Caco-2 (cell line): ENCODE measurements at regions of chr2 and their contacts with region 1.

Region 1: DNA sequence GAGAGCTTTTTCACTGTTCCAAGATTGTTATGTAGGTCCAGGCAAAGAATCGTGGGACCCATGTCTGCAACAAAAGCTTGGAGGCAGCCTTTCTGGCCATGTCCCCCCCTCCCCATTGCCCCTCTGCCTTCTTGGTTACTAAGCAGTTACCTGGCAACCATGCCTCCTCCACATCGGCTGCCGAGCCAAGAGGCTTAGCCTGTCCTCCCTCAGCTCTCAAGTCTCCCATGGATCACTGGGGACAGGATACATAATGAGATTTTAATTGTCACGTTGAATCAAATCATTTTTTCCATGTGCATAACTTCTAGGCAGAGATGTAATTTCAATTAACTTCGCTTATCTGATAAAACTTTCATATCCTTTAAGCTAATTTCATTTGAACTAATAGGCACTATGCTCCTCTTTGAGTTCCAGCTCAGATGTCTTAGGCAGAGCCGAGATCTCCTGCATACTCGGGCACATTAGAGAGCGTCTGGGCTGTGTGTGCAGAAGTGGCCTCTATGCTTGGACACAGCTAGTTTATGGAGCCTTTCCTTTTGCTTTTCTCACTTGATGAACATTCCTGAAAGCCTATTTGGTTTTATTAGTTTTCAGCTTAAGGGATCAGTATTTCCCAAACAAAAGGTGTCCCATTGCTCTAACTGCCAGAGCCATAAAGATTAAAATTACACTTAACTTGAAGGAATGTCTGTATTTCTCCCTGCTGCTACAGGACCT is 80.7 kb downstream of the LYPD1 start:
- DNase-seq: peak in 1 of 2 experiments; percentile 12
- H3K4me3 ChIP-seq: no peak overlapping the region
- H3K4me3 Mint-ChIP-seq: no peak overlapping the region
- H3K27ac Mint-ChIP-seq: no peak overlapping the region
- H3K4me1 ChIP-seq: peaks cover 48% of the 10 kb centered on the region
- H3K4me1 Mint-ChIP-seq: peaks cover 47% of the 10 kb centered on the region
- H3K27me3 ChIP-seq: no peaks in the 10 kb centered on the region
- H3K27me3 Mint-ChIP-seq: no peaks in the 10 kb centered on the region
- CTCF ChIP-seq: no peak

Region 2: GRCh38 chr2:132562245-132562644 is 27.0 kb before region 1 on chr2:
- CTCF ChIA-PET with region 1: no interaction called
- POLR2A ChIA-PET with region 1: no interaction called
- intact Hi-C with region 1: loop called (anchors 2 kb)
- DNase-seq: no peak
- H3K4me3 ChIP-seq: no peak overlapping the region
- H3K4me3 Mint-ChIP-seq: no peak overlapping the region
- H3K27ac Mint-ChIP-seq: no peak overlapping the region
- H3K4me1 ChIP-seq: peaks cover 5% of the 10 kb centered on the region; the same call in 1 of the 2 replicates
- H3K4me1 Mint-ChIP-seq: peaks cover 8% of the 10 kb centered on the region
- H3K27me3 ChIP-seq: no peaks in the 10 kb centered on the region
- H3K27me3 Mint-ChIP-seq: no peaks in the 10 kb centered on the region
- CTCF ChIP-seq: no peak

Region 3: DNA sequence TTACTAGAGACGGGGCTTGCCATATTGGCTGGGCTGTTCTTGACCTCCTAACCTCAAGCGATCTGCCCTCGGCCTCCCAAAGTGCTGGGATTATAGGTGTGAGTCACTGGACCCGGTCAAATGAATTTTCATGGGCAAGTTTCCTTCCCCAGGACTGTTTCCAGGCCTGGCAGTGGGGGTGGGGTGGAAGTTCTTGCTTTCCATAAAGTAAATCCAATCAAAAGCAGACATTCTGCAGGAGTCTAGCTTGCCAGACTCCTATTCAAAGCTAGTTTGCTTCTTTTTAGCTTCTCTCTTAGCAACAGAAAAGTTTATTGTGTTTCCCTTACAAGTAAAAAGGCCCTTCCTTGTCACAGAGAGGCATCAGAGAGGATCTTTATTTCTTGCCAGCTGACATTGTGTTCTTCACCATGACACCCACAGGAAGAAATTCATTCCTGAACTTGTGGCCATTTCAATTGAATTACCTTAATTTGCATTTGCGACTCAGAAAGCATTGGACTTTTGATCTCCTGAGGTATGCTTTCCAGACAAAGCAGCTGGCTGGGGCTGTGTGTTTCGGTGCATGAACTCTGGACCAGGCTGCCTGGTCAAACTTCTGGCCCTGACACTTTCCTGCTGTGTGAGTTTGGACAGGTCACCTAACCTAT is 42.9 kb after region 1 on chr2:
- CTCF ChIA-PET with region 1: no interaction called
- POLR2A ChIA-PET with region 1: no interaction called
- intact Hi-C with region 1: loop called (anchors 2 kb)
- DNase-seq: peak; percentile 61 to 72
- H3K4me3 ChIP-seq: no peak overlapping the region
- H3K4me3 Mint-ChIP-seq: no peak overlapping the region
- H3K27ac Mint-ChIP-seq: peak overlapping the region; percentile 48
- H3K4me1 ChIP-seq: peaks cover 25% of the 10 kb centered on the region
- H3K4me1 Mint-ChIP-seq: peaks cover 20% of the 10 kb centered on the region
- H3K27me3 ChIP-seq: no peaks in the 10 kb centered on the region
- H3K27me3 Mint-ChIP-seq: no peaks in the 10 kb centered on the region
- CTCF ChIP-seq: no peak

Region 4: GRCh38 chr2:132642415-132642814 is 53.1 kb after region 1 on chr2:
- CTCF ChIA-PET with region 1: no interaction called
- POLR2A ChIA-PET with region 1: no interaction called
- intact Hi-C with region 1: loop called (anchors 2 kb)
- DNase-seq: peak in 1 of 2 experiments; percentile 41
- H3K4me3 ChIP-seq: no peak overlapping the region
- H3K4me3 Mint-ChIP-seq: no peak overlapping the region
- H3K27ac Mint-ChIP-seq: no peak overlapping the region
- H3K4me1 ChIP-seq: peaks cover 14% of the 10 kb centered on the region
- H3K4me1 Mint-ChIP-seq: peaks cover 25% of the 10 kb centered on the region
- H3K27me3 ChIP-seq: no peaks in the 10 kb centered on the region
- H3K27me3 Mint-ChIP-seq: no peaks in the 10 kb centered on the region
- CTCF ChIP-seq: no peak